ENCODE measurements at regions of chr1 and their contacts with region 1.

Region 1: DNA sequence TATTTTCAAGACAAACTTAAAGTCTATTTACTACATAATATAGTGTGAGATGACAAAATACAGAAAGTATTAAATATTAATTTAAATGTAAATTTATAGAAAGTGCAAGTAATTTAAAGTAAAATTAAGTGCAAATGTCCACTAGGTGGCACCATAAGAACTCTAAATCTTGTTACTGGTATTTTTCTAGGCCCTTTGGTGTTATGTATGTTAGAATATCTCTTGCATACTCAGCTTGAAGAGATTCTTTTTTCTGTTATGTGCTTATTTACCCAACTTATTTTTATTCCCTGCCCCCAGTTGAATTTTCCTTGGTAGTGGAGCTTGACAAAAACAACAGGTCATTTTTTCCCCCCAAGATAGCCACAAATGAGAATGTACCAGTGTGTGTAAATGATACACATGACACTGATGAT is 71.5 kb downstream of the RPS6KC1 start:
- DNase-seq: no peak
- ATAC-seq: no peak
- H3K4me3 Mint-ChIP-seq: no peak overlapping the region
- H3K27ac Mint-ChIP-seq: no peak overlapping the region
- H3K4me1 Mint-ChIP-seq: peaks cover 1% of the 10 kb centered on the region
- H3K27me3 Mint-ChIP-seq: no peaks in the 10 kb centered on the region
- CTCF ChIP-seq: peak; percentile 19

Region 2: DNA sequence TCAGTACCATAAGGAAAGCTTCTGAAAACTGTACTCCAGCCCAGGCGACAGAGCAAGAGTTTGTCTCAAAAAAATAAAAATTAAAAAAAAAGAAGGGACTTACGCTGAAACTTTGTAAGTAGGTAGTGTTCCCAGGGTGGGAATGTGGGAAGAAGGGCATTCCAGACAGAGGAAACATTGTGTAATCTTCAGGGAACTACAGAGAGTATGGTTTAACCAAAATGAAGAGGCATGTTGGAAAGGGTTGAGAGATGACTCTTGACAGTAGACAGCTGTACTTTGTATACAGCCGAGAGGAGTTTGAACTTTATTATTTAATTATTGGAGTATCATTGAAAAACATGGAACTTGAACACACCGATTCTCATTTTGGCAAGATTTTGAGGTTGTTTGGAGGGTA is 794.3 kb before region 1 on chr1:
- CTCF ChIA-PET with region 1: no interaction called
- POLR2A ChIA-PET with region 1: no interaction called
- intact Hi-C with region 1: no loop called
- DNase-seq: no peak
- ATAC-seq: no peak
- H3K4me3 Mint-ChIP-seq: no peak overlapping the region
- H3K27ac Mint-ChIP-seq: no peak overlapping the region
- H3K4me1 Mint-ChIP-seq: peaks cover 9% of the 10 kb centered on the region
- H3K27me3 Mint-ChIP-seq: no peaks in the 10 kb centered on the region
- CTCF ChIP-seq: no peak

Region 3: GRCh38 chr1:213103377-213104306 is 18.9 kb before region 1 on chr1:
- CTCF ChIA-PET with region 1: interaction called, 11 read pairs
- POLR2A ChIA-PET with region 1: no interaction called
- intact Hi-C with region 1: no loop called
- DNase-seq: no peak
- ATAC-seq: peak; percentile 70
- H3K4me3 Mint-ChIP-seq: peak overlapping the region; percentile 21
- H3K27ac Mint-ChIP-seq: peak overlapping the region; percentile 73
- H3K4me1 Mint-ChIP-seq: peaks cover 18% of the 10 kb centered on the region
- H3K27me3 Mint-ChIP-seq: no peaks in the 10 kb centered on the region
- CTCF ChIP-seq: no peak

Region 4: DNA sequence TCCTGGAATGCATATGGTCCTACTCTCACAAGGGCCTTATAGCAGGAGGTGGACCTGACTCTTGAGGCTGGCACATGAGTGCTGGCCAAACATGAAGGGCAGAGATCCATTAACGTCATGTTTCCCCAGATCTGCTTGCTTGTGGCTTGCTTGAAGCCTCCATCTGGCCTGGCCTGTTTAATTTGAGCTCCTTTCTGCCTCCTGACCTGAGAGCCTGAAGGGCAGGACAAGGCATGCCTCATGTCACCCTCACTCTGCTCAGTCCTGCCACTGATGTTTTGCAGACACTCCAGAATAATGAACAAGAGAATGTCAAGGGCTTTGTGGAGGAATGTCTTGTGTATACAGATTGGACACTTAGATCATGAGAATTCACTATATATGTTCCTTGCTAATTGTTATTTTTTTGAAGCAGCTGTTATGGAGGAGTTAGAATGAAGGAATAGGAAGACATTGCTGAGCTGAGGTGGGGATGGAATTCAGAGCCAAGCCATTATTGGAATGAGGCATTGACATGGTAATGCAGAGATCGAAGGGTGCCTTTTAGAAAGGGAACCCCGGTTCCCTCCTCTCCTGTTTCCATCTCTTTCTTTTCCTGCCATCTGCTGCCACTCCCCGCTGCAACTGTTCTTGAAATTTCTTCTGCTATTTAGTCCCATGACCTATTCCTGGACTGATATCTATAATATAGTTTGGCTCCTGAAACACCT is 408.2 kb after region 1 on chr1:
- CTCF ChIA-PET with region 1: no interaction called
- POLR2A ChIA-PET with region 1: no interaction called
- intact Hi-C with region 1: no loop called
- DNase-seq: no peak
- ATAC-seq: no peak
- H3K4me3 Mint-ChIP-seq: no peak overlapping the region
- H3K27ac Mint-ChIP-seq: no peak overlapping the region
- H3K4me1 Mint-ChIP-seq: no peaks in the 10 kb centered on the region
- H3K27me3 Mint-ChIP-seq: no peaks in the 10 kb centered on the region
- CTCF ChIP-seq: no peak

Region 5: DNA sequence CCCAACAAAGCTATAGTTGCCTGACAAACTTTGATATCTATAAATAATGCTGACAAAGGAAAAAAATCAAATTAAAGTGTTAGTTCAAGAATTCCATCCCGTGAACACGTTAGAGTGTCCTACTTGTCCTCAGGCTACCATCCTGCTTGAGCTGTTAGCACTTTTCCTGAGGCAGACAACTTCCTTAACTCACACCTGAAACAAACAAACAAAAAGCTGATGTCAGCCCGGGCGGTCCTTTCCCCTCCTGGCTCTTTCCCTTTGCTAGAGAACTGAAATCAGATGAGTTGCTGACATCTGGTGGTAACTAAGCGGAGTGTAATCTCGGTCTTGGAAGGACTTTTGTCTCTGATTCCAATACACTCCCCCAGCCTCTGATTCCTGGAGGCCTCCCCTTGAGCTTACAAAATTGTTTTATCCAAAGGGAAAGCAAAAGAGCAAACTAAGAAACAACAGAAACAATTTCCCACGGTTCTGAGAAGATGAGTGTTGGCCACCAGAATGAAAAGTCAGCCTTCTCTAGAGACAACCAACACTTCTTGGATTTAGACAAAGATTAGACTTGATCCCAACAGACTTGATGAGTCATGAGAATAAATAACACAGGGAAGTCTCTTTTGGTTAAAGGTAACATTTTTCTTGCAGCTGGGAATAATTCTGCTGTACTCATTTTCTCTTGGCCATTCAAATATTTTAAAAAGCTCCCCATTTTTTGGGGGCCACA is 1000.7 kb after region 1 on chr1:
- CTCF ChIA-PET with region 1: interaction called, 3 read pairs
- POLR2A ChIA-PET with region 1: no interaction called
- intact Hi-C with region 1: loop called (anchors 10 kb)
- DNase-seq: no peak
- ATAC-seq: no peak
- H3K4me3 Mint-ChIP-seq: no peak overlapping the region
- H3K27ac Mint-ChIP-seq: no peak overlapping the region
- H3K4me1 Mint-ChIP-seq: no peaks in the 10 kb centered on the region
- H3K27me3 Mint-ChIP-seq: peaks cover 3% of the 10 kb centered on the region
- CTCF ChIP-seq: no peak